CD4-positive, alpha-beta T cell (primary cell): ENCODE measurements at regions of chr5 and their contacts with region 1.

Region 1: GRCh38 chr5:57779383-57780223 is 297.0 kb upstream of the ACTBL2 start:
- DNase-seq: peak in 4 of 14 experiments; percentile 21 to 47 (median 40)
- ATAC-seq: no peak
- H3K4me3 ChIP-seq: no peak overlapping the region
- H3K4me3 Mint-ChIP-seq: no peak overlapping the region
- H3K27ac ChIP-seq: no peak overlapping the region
- H3K27ac Mint-ChIP-seq: no peak overlapping the region
- H3K4me1 ChIP-seq: no peaks in the 10 kb centered on the region
- H3K4me1 Mint-ChIP-seq: no peaks in the 10 kb centered on the region
- H3K27me3 ChIP-seq: peaks cover 0 to 5% of the 10 kb centered on the region in 2 experiments
- H3K27me3 Mint-ChIP-seq: no peaks in the 10 kb centered on the region
- CTCF ChIP-seq: peak; percentile 49

Region 2: DNA sequence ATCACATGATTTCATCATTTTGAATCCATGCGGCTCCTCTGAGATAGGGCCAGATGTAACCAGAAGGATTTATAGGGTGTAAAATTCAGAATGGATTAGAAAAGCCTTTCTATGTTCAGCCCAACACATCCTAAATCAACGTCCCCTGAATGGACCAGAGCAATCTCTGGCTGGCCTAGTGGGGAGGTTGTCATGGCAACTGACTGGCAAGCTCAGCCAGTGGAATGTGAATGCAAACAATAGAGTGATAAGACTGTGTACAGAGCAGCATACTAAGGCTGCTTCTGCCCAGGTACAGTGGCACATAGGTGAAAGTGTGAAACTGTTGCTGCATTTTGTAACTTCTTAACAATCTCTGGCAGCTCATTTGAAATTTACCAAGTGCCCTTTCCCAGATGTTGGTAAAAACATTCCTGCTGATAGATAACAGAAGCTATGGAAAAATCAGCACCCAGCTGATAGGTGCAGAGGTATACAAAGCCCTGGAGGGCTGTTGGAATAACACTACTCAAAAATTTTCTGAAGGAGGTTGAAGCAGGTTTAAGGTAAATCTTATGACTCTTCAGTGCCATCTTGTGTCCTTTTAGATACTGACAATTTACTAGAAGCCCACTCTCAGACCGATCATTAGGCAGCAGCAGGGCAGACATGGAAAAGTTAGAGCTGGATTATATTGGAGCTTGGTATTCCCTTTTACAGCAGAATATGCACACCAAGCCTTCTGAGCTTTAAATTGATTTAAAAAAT is 1070.5 kb after region 1 on chr5:
- CTCF ChIA-PET with region 1: no interaction called
- POLR2A ChIA-PET with region 1: no interaction called
- intact Hi-C with region 1: loop called in 1 of 2 experiments (anchors 10 kb)
- DNase-seq: peak in 3 of 14 experiments; percentile 13 to 31 (median 24)
- ATAC-seq: no peak
- H3K4me3 ChIP-seq: no peak overlapping the region
- H3K4me3 Mint-ChIP-seq: no peak overlapping the region
- H3K27ac ChIP-seq: no peak overlapping the region
- H3K27ac Mint-ChIP-seq: no peak overlapping the region
- H3K4me1 ChIP-seq: no peaks in the 10 kb centered on the region
- H3K4me1 Mint-ChIP-seq: no peaks in the 10 kb centered on the region
- H3K27me3 ChIP-seq: no peaks in the 10 kb centered on the region
- H3K27me3 Mint-ChIP-seq: peaks cover 18% of the 10 kb centered on the region
- CTCF ChIP-seq: peak; percentile 30